IMR-90 (cell line): ENCODE measurements at regions of chr2 and their contacts with region 1.

Region 1: GRCh38 chr2:39436592-39437510 is at the start of gene MAP4K3:
- DNase-seq: peak; percentile 94
- ATAC-seq: peak; percentile 89
- H3K4me3 ChIP-seq: peak within 1 kb of the TSS; percentile 97
- H3K27ac ChIP-seq: peak within 1 kb of the TSS; percentile 87
- H3K4me1 ChIP-seq: peaks cover 17% of the 10 kb centered on the region
- H3K27me3 ChIP-seq: no peaks in the 10 kb centered on the region
- CTCF ChIP-seq: no peak
- POLR2A ChIP-seq: peak; percentile 76
- RAD21 ChIP-seq: no peak
- total RNA-seq, gene MAP4K3: 32.6 and 48.3 TPM in 2 replicates

Region 2: GRCh38 chr2:39304200-39304599 is 132.7 kb before region 1 on chr2:
- CTCF ChIA-PET with region 1: no interaction called
- POLR2A ChIA-PET with region 1: no interaction called
- dilution Hi-C with region 1: no loop called
- in situ Hi-C with region 1: no loop called
- intact Hi-C with region 1: loop called (anchors 10 kb)
- DNase-seq: no peak
- ATAC-seq: no peak
- H3K4me3 ChIP-seq: no peak overlapping the region
- H3K27ac ChIP-seq: no peak overlapping the region
- H3K4me1 ChIP-seq: no peaks in the 10 kb centered on the region; the same call in 1 of the 2 replicates
- H3K27me3 ChIP-seq: no peaks in the 10 kb centered on the region
- CTCF ChIP-seq: no peak
- POLR2A ChIP-seq: no peak
- RAD21 ChIP-seq: no peak

Region 3: GRCh38 chr2:39492095-39492590 is 55.3 kb after region 1 on chr2:
- CTCF ChIA-PET with region 1: interaction called, 3 read pairs
- POLR2A ChIA-PET with region 1: interaction called, 3 read pairs
- dilution Hi-C with region 1: no loop called
- in situ Hi-C with region 1: no loop called
- intact Hi-C with region 1: loop called (anchors 2 kb)
- DNase-seq: peak; percentile 98
- ATAC-seq: peak; percentile 53
- H3K4me3 ChIP-seq: no peak overlapping the region
- H3K27ac ChIP-seq: no peak overlapping the region
- H3K4me1 ChIP-seq: peaks cover 13% of the 10 kb centered on the region
- H3K27me3 ChIP-seq: no peaks in the 10 kb centered on the region
- CTCF ChIP-seq: no peak
- POLR2A ChIP-seq: no peak
- RAD21 ChIP-seq: no peak

Region 4: GRCh38 chr2:39513641-39514094 is 76.8 kb after region 1 on chr2:
- CTCF ChIA-PET with region 1: interaction called, 3 read pairs
- POLR2A ChIA-PET with region 1: no interaction called
- dilution Hi-C with region 1: no loop called
- in situ Hi-C with region 1: loop called (anchors 5 kb)
- intact Hi-C with region 1: loop called (anchors 2 kb)
- DNase-seq: peak; percentile 97
- ATAC-seq: peak; percentile 91
- H3K4me3 ChIP-seq: no peak overlapping the region
- H3K27ac ChIP-seq: peak overlapping the region; percentile 42
- H3K4me1 ChIP-seq: peaks cover 31% of the 10 kb centered on the region
- H3K27me3 ChIP-seq: no peaks in the 10 kb centered on the region
- CTCF ChIP-seq: peak; percentile 86
- POLR2A ChIP-seq: 0 out of 2 replicates have a peak, but pooled peaks have one; percentile 35
- RAD21 ChIP-seq: peak; percentile 87

Region 5: DNA sequence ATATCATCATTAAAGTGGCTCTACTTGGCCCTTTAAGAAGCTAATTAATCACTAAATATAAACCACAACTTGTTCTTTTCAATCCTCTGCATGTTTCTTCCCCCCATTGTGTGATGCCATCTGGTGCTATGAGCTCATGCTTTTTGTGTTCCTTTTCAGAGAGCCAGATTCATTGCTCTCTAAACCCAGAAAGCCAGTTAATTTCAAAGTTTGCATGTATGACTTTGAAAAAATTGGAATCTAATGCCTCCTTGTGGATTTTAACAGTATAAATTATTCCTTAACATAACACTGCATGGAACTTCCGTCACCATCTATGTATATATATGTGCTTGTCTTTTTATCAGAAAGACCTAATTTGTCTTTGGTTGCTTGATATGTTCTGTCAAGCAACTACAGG is 260.0 kb after region 1 on chr2:
- CTCF ChIA-PET with region 1: interaction called, 3 read pairs
- POLR2A ChIA-PET with region 1: interaction called, 5 read pairs
- dilution Hi-C with region 1: no loop called
- in situ Hi-C with region 1: no loop called
- intact Hi-C with region 1: loop called (anchors 2 kb)
- DNase-seq: peak; percentile 87
- ATAC-seq: peak; percentile 68
- H3K4me3 ChIP-seq: no peak overlapping the region
- H3K27ac ChIP-seq: no peak overlapping the region
- H3K4me1 ChIP-seq: peaks cover 10% of the 10 kb centered on the region
- H3K27me3 ChIP-seq: no peaks in the 10 kb centered on the region
- CTCF ChIP-seq: peak; percentile 60
- POLR2A ChIP-seq: no peak
- RAD21 ChIP-seq: peak; percentile 69

Region 6: GRCh38 chr2:40273734-40274182 is 836.9 kb after region 1 on chr2:
- CTCF ChIA-PET with region 1: no interaction called
- POLR2A ChIA-PET with region 1: no interaction called
- dilution Hi-C with region 1: no loop called
- in situ Hi-C with region 1: no loop called
- intact Hi-C with region 1: no loop called
- DNase-seq: peak; percentile 21
- ATAC-seq: peak; percentile 22
- H3K4me3 ChIP-seq: no peak overlapping the region
- H3K27ac ChIP-seq: peak overlapping the region; percentile 64; the same call in 1 of the 2 replicates
- H3K4me1 ChIP-seq: peaks cover 12% of the 10 kb centered on the region
- H3K27me3 ChIP-seq: no peaks in the 10 kb centered on the region
- CTCF ChIP-seq: no peak
- POLR2A ChIP-seq: no peak
- RAD21 ChIP-seq: no peak